GM10248 (cell line): ENCODE measurements at regions of chr6 and their contacts with region 1.

Region 1: GRCh38 chr6:16700202-16700915 is 60.9 kb downstream of the ATXN1 start:
- DNase-seq: no peak
- CTCF ChIP-seq: no peak

Region 2: GRCh38 chr6:16716321-16716858 is 16.0 kb after region 1 on chr6:
- CTCF ChIA-PET with region 1: interaction called, 11 read pairs
- POLR2A ChIA-PET with region 1: no interaction called
- DNase-seq: no peak
- CTCF ChIP-seq: no peak

Region 3: GRCh38 chr6:16727996-16728395 is 27.6 kb after region 1 on chr6:
- CTCF ChIA-PET with region 1: no interaction called
- POLR2A ChIA-PET with region 1: no interaction called
- DNase-seq: no peak
- CTCF ChIP-seq: no peak